ENCODE measurements at regions of chr11 and their contacts with region 1.

Region 1: DNA sequence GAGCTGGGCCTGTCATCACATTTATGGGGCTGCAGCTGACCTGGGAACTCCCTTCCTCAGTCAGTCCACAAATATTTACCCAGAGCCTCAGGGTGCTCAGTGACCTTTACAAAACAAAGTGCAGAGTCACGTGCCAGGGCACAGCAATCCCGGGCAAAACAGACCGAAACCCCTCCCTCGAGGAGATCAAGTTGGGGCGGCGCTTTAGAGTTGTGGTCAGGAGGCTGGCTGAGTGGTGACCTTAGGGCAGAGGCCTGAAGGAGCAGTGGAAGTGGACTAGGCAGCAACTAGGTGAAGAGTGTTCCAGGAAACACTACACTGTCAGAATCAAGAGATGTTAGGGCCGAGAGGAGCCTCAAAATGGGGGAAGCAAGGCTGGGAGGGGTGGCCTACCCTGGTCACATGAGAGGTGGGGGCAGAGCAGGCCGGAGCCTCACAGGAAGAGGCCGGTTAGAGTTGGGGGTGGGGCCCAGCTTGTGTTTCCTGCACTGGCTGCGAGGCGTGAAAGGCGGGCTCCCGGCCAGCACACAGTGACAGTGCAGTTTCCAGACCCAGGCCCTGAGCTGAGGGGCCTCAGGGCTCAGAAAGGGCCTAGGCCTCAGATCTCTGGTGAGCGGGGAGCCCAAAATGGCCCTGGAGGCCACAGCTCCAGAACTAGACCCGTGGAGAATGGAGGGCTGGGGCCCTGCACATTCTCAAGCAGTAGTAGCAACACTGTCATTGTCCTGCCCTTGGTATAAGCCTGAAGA is 3.7 kb upstream of the NEAT1 start:
- DNase-seq: peak; percentile 97 to 99
- ATAC-seq: peak; percentile 23 to 35
- H3K4me3 ChIP-seq: peak overlapping the region; percentile 55 to 92 (median 64)
- H3K27ac ChIP-seq: peak overlapping the region; percentile 98 to 100 (median 100)
- H3K4me1 ChIP-seq: peaks cover 37 to 60% of the 10 kb centered on the region in 2 donors
- H3K27me3 ChIP-seq: no peaks in the 10 kb centered on the region
- CTCF ChIP-seq: no peak
- POLR2A ChIP-seq: no peak

Region 2: GRCh38 chr11:65382033-65382807 is 36.7 kb before region 1 on chr11 and contains the start of gene SLC25A45:
- in situ Hi-C with region 1: loop called in 1 of 4 experiments (anchors 5 kb)
- intact Hi-C with region 1: loop called (anchors 1 kb)
- DNase-seq: peak; percentile 95 to 96
- ATAC-seq: peak; percentile 80 to 86
- H3K4me3 ChIP-seq: peak within 1 kb of the TSS; percentile 46 to 63 (median 54)
- H3K27ac ChIP-seq: peak within 1 kb of the TSS; percentile 96 to 100 (median 98)
- H3K4me1 ChIP-seq: peaks cover 46 to 51% of the 10 kb centered on the region in 2 donors
- H3K27me3 ChIP-seq: no peaks in the 10 kb centered on the region
- CTCF ChIP-seq: peak; percentile 93 to 99 (median 96)
- POLR2A ChIP-seq: peak; percentile 62 to 89
- total RNA-seq, gene SLC25A45: 2.6 to 12.4 (median 5.6) TPM

Region 3: GRCh38 chr11:65477149-65477965 is 58.5 kb after region 1 on chr11:
- in situ Hi-C with region 1: loop called in 1 of 4 experiments (anchors 10 kb)
- intact Hi-C with region 1: loop called (anchors 1 kb)
- DNase-seq: peak; percentile 97 to 98
- ATAC-seq: peak; percentile 59 to 60
- H3K4me3 ChIP-seq: peak overlapping the region; percentile 79 to 88 (median 84)
- H3K27ac ChIP-seq: peak overlapping the region; percentile 97 to 100 (median 98)
- H3K4me1 ChIP-seq: peaks cover 61 to 67% of the 10 kb centered on the region in 2 donors
- H3K27me3 ChIP-seq: no peaks in the 10 kb centered on the region
- CTCF ChIP-seq: peak in 2 of 5 experiments; percentile 38 to 65
- POLR2A ChIP-seq: peak; percentile 97 to 99

Region 4: GRCh38 chr11:65506770-65507505 is 88.1 kb after region 1 on chr11:
- in situ Hi-C with region 1: loop called (anchors 5 to 10 kb)
- intact Hi-C with region 1: loop called (anchors 1 kb)
- DNase-seq: peak in 1 of 2 donors; percentile 63
- ATAC-seq: peak; percentile 3 to 12
- H3K4me3 ChIP-seq: peak overlapping the region; percentile 18 to 93 (median 55)
- H3K27ac ChIP-seq: peak overlapping the region; percentile 91 to 99 (median 94)
- H3K4me1 ChIP-seq: peaks cover 38 to 46% of the 10 kb centered on the region in 2 donors
- H3K27me3 ChIP-seq: no peaks in the 10 kb centered on the region
- CTCF ChIP-seq: no peak
- POLR2A ChIP-seq: peak; percentile 24 to 56

Region 5: GRCh38 chr11:65569973-65570918 is 151.4 kb after region 1 on chr11 and contains the start of gene ZNRD2:
- in situ Hi-C with region 1: no loop called
- intact Hi-C with region 1: loop called (anchors 2 kb)
- DNase-seq: peak; percentile 97
- ATAC-seq: peak; percentile 63 to 65
- H3K4me3 ChIP-seq: peak within 1 kb of the TSS; percentile 84 to 99 (median 95)
- H3K27ac ChIP-seq: peak within 1 kb of the TSS; percentile 100
- H3K4me1 ChIP-seq: peaks cover 49 to 61% of the 10 kb centered on the region in 2 donors
- H3K27me3 ChIP-seq: no peaks in the 10 kb centered on the region
- CTCF ChIP-seq: peak in 4 of 5 experiments; percentile 45 to 70 (median 58)
- POLR2A ChIP-seq: peak; percentile 88 to 95
- total RNA-seq, gene ZNRD2: 54.7 to 99.4 (median 75.3) TPM

Region 6: DNA sequence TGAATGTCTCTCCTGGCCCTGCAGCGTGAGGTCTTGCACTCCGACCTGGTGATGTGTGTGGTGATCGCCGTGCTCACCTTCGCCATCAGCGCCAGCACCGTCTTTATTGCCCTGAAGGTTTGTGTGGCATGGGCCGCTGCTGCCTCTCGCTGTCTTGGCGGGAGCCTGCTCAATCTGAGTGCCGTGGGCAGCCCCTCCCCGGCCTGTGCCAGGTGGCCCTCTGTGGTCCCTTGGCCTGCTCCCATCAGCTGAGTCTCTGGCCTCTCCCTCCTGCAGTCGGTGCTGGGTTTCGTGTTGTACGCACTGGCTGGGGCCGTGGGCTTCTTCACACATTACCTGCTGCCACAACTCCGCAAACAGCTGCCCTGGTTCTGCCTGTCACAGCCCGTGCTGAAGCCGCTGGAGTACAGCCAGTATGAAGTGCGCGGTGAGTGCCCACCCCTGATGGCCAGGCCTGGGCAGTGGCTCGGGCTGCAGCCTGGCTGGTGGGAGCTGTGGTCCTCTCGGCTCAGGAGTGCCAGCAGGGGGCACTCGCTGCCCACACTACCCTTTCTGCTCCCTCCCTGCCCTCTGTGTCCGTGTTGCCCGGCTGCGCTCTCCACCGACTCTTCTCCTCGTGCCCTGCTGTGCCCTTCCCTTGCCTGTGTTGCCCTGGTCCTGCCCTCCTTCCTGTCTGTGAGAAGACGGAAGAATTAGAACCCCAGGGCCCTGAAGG is 206.9 kb after region 1 on chr11:
- in situ Hi-C with region 1: no loop called
- intact Hi-C with region 1: no loop called
- DNase-seq: peak in 1 of 2 donors; percentile 46
- ATAC-seq: peak; percentile 37 to 46
- H3K4me3 ChIP-seq: no peak overlapping the region
- H3K27ac ChIP-seq: no peak overlapping the region
- H3K4me1 ChIP-seq: no peaks in the 10 kb centered on the region
- H3K27me3 ChIP-seq: no peaks in the 10 kb centered on the region
- CTCF ChIP-seq: peak in 4 of 5 experiments; percentile 47 to 63 (median 56)
- POLR2A ChIP-seq: no peak